Mammary epithelial cell (primary cell): ENCODE measurements at regions of chr4 and their contacts with region 1.

Region 1: GRCh38 chr4:123649645-123650391 is 253.2 kb downstream of the SPRY1 start:
- DNase-seq: peak; percentile 94
- H3K4me3 ChIP-seq: no peak overlapping the region
- H3K27ac ChIP-seq: peak overlapping the region; percentile 94
- H3K4me1 ChIP-seq: peaks cover 26% of the 10 kb centered on the region
- H3K27me3 ChIP-seq: no peaks in the 10 kb centered on the region
- CTCF ChIP-seq: no peak

Region 2: DNA sequence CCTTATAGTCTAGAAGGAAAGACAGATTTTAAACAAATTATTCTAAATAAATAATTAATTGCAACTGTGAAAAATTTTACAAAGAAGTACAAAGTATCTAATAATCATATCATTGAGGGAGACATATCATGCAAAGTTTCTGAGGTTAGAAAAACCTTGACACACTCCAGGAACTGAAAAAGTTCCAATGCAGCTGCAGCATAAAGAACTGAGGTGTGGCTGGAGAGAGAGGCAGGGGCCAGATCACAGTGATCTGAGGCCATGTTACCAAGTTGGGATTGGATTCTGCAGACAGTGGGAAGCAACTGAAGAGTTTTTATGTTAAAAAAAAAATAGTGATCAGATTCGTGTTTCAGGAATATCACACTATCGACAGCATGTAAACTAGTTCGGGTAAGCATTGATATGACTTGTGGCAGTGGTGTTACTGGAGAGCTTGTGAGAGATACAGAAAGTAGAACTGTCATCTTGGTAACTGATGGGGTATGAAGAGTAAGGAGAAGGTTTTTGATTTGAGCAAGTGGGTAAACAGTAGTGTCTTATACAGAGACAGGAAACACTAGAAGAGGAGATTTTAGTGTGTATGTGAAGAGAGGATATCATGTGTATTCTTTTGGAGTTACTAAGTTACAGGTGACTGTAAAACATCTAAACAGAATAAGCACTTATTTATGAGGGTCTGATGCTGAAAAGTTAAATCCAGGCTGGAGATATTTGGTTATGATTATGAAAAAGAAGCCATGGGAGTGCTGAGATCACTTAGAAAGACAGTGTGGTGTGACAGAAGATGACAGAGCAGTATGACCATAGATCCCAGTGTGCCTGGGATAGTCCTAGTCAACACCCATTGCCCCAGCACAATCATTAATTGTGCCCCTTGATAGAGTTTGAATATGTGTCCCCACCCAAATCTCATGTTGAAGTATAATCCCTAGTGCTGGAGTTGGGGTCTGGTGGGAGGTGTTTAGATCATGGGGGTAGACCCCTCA is 268.8 kb before region 1 on chr4:
- CTCF ChIA-PET with region 1: no interaction called
- dilution Hi-C with region 1: no loop called
- in situ Hi-C with region 1: loop called in 1 of 2 experiments (anchors 10 kb)
- intact Hi-C with region 1: no loop called
- DNase-seq: no peak
- H3K4me3 ChIP-seq: no peak overlapping the region
- H3K27ac ChIP-seq: no peak overlapping the region
- H3K4me1 ChIP-seq: no peaks in the 10 kb centered on the region
- H3K27me3 ChIP-seq: no peaks in the 10 kb centered on the region
- CTCF ChIP-seq: no peak

Region 3: DNA sequence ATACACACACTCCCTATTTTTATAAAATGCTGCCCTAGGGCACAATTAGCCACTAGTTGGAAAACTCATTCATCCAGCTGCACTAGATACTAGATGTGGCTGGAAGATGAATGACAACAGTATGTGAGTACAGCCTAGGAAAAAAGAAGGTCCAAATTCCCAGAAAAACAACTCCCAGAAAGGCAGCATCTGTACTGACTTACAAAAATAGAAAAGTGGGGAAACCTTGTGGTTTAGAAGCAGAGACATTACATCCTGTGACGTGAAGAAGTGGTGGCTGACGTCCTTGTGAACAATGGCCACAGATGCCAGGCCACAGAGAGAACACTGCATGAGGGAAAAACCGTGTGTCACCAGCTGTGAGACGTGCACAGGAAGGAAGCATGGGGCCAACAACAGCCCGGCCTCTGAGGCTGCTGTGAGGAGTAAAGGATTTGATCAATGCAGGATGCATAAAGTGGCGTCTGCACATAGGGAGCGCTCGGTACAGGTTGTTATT is 172.1 kb before region 1 on chr4:
- CTCF ChIA-PET with region 1: interaction called, 3 read pairs
- dilution Hi-C with region 1: no loop called
- in situ Hi-C with region 1: no loop called
- intact Hi-C with region 1: loop called (anchors 10 kb)
- DNase-seq: no peak
- H3K4me3 ChIP-seq: no peak overlapping the region
- H3K27ac ChIP-seq: no peak overlapping the region
- H3K4me1 ChIP-seq: peaks cover 20% of the 10 kb centered on the region
- H3K27me3 ChIP-seq: no peaks in the 10 kb centered on the region
- CTCF ChIP-seq: no peak

Region 4: GRCh38 chr4:123495530-123495929 is 154.3 kb before region 1 on chr4:
- CTCF ChIA-PET with region 1: no interaction called
- dilution Hi-C with region 1: no loop called
- in situ Hi-C with region 1: no loop called
- intact Hi-C with region 1: no loop called
- DNase-seq: peak; percentile 69
- H3K4me3 ChIP-seq: no peak overlapping the region
- H3K27ac ChIP-seq: no peak overlapping the region
- H3K4me1 ChIP-seq: no peaks in the 10 kb centered on the region
- H3K27me3 ChIP-seq: no peaks in the 10 kb centered on the region
- CTCF ChIP-seq: no peak

Region 5: GRCh38 chr4:123564758-123565346 is 85.0 kb before region 1 on chr4:
- CTCF ChIA-PET with region 1: no interaction called
- dilution Hi-C with region 1: no loop called
- in situ Hi-C with region 1: no loop called
- intact Hi-C with region 1: loop called (anchors 5 kb)
- DNase-seq: peak; percentile 72
- H3K4me3 ChIP-seq: no peak overlapping the region
- H3K27ac ChIP-seq: no peak overlapping the region
- H3K4me1 ChIP-seq: peaks cover 5% of the 10 kb centered on the region
- H3K27me3 ChIP-seq: no peaks in the 10 kb centered on the region
- CTCF ChIP-seq: peak; percentile 92 to 99